A673 (cell line): ENCODE measurements at regions of chr6 and their contacts with region 1.

Region 1: GRCh38 chr6:12911387-12911960 is 194.9 kb downstream of the PHACTR1 start:
- DNase-seq: peak; percentile 62
- H3K4me3 ChIP-seq: no peak overlapping the region
- H3K27ac ChIP-seq: no peak overlapping the region
- H3K4me1 ChIP-seq: no peaks in the 10 kb centered on the region
- H3K27me3 ChIP-seq: peaks cover 6% of the 10 kb centered on the region
- CTCF ChIP-seq: peak; percentile 58

Region 2: GRCh38 chr6:13113981-13114593 is 202.6 kb after region 1 on chr6:
- CTCF ChIA-PET with region 1: no interaction called
- POLR2A ChIA-PET with region 1: no interaction called
- intact Hi-C with region 1: loop called (anchors 10 kb)
- DNase-seq: no peak
- H3K4me3 ChIP-seq: no peak overlapping the region
- H3K27ac ChIP-seq: no peak overlapping the region
- H3K4me1 ChIP-seq: no peaks in the 10 kb centered on the region
- H3K27me3 ChIP-seq: peaks cover 5% of the 10 kb centered on the region
- CTCF ChIP-seq: no peak